Posterior vena cava (tissue), 2 donors: ENCODE measurements at regions of chr4 and their contacts with region 1.

Region 1: GRCh38 chr4:107317611-107318010 is 281.5 kb upstream of the DKK2 start:
- DNase-seq: no peak

Region 2: GRCh38 chr4:107283587-107284559 is 33.7 kb before region 1 on chr4:
- intact Hi-C with region 1: loop called in 1 of 2 experiments (anchors 1 kb)
- DNase-seq: no peak

Region 3: DNA sequence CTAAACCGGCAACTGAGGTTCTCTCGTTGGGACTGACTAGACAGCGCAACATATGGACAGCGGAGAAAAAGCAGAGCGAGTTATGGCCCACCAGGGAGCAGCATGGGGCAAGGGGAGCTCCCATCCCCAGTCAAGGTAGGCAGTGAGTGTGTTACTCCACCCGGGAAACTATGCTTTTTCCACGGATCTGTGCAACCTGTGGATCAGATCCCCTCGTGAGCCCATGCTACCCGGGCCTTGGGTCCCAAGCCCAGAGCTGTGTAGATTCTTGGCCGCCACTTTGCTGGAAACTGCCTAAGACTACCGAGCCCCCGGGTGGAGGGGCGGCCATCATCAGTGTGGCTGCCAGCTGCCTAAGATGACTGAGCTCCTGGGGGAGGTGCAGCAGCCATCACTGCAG is 261.5 kb after region 1 on chr4:
- intact Hi-C with region 1: no loop called
- DNase-seq: peak; percentile 64